Activated CD4-positive, alpha-beta T cell treated with anti-CD3 and anti-CD28 coated beads for 36 hours (primary cell): ENCODE measurements at regions of chr7 and their contacts with region 1.

Region 1: DNA sequence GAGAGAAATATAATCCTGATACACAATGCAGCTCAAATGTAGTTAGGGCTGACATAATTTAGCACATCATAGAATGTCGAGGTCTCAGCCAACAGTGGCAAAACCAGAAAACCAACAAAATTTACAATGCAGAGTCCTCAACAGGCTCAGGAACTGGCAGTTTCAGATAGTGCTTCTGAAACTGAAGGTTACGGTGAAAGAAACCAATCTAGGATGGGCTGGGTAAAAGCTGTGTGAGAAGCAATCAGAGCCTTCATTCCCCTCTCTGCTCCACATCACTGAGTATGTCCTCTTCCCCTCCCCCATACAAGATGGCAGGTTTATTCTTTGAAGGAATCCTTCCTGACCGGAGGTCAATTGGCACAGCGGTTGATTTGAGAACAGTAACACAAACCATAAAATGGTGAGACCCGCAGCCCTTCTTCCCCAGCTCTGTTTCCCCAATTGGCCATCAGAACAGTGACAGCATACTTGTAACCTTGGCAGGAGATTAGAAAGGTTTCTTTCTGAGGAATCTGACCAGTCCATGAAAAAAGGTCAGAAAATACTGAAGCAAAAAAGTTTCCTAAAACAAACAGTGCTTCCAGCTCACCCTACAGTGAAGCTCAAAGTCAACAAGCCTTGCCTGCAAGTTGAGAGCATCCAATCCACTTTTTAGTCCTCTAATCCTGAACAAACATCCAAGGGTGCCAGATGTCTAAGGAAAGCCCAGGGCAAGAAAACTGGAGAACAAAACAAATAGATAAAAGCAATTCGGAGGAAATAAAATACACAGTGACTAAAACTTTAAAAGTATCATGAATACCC is 54.0 kb upstream of the IL6 start:
- DNase-seq: no peak
- ATAC-seq: no peak
- H3K4me3 Mint-ChIP-seq: no peak overlapping the region
- H3K27ac Mint-ChIP-seq: no peak overlapping the region
- H3K4me1 Mint-ChIP-seq: peaks cover 56% of the 10 kb centered on the region
- H3K27me3 Mint-ChIP-seq: peaks cover 1% of the 10 kb centered on the region

Region 2: DNA sequence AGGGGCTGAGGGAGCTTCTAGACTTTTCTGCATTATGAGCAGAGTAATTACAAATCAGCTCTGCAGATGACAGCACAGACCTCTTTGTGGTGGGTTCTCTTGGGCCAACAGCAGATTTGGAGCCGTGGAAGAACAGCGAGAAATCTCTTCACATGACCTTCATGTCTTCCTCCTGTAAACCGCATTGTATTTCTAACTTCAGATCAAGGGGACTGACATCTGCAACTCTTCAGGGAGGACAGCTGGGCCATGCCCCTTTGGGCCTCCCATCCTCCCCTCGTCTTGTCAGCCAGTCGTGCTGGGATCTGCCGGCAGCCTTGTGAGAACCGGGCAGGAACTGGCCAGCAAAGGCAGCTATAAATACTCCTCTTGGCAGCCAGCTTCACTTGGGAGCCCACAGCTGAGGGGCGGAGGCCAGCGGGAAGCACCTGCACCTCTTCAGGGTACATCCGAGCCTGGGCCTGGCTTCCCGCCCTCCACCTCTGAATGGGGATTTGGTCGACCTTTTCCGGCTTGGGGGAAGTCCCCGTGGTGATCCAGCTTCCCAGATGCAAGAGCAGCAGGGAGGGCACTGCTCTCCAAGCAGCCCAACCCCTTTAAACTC is 227.8 kb before region 1 on chr7:
- CTCF ChIA-PET with region 1: no interaction called
- POLR2A ChIA-PET with region 1: no interaction called
- intact Hi-C with region 1: no loop called
- DNase-seq: peak; percentile 10
- ATAC-seq: no peak
- H3K4me3 Mint-ChIP-seq: no peak overlapping the region
- H3K27ac Mint-ChIP-seq: no peak overlapping the region
- H3K4me1 Mint-ChIP-seq: peaks cover 18% of the 10 kb centered on the region
- H3K27me3 Mint-ChIP-seq: peaks cover 18% of the 10 kb centered on the region

Region 3: GRCh38 chr7:22559829-22560489 is 113.1 kb before region 1 on chr7:
- CTCF ChIA-PET with region 1: interaction called, 3 read pairs
- POLR2A ChIA-PET with region 1: no interaction called
- intact Hi-C with region 1: loop called (anchors 2 to 5 kb)
- DNase-seq: peak; percentile 82
- ATAC-seq: peak; percentile 65
- H3K4me3 Mint-ChIP-seq: no peak overlapping the region
- H3K27ac Mint-ChIP-seq: no peak overlapping the region
- H3K4me1 Mint-ChIP-seq: peaks cover 37% of the 10 kb centered on the region
- H3K27me3 Mint-ChIP-seq: peaks cover 16% of the 10 kb centered on the region

Region 4: DNA sequence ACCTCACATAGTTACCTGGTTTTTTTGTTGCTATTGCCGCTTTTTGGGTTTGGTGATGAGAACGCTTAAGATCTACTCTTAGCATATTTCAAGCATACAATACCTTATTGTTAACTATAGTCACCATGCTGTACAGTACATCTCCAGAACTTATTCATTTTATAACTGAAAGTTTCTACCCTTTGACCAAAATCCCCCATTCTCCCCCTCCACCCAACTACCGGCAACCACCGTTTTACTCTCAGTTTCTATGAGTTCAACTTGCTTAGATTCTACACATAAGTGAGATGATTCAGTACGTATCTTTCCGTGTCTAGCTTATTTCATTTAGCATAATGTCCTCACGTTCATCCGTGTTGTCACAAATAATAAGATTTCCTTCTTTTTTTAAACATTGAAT is 32.8 kb before region 1 on chr7:
- CTCF ChIA-PET with region 1: no interaction called
- POLR2A ChIA-PET with region 1: no interaction called
- intact Hi-C with region 1: loop called (anchors 1 to 2 kb)
- DNase-seq: peak; percentile 69
- ATAC-seq: peak; percentile 97
- H3K4me3 Mint-ChIP-seq: no peak overlapping the region
- H3K27ac Mint-ChIP-seq: no peak overlapping the region
- H3K4me1 Mint-ChIP-seq: peaks cover 22% of the 10 kb centered on the region
- H3K27me3 Mint-ChIP-seq: peaks cover 31% of the 10 kb centered on the region

Region 5: DNA sequence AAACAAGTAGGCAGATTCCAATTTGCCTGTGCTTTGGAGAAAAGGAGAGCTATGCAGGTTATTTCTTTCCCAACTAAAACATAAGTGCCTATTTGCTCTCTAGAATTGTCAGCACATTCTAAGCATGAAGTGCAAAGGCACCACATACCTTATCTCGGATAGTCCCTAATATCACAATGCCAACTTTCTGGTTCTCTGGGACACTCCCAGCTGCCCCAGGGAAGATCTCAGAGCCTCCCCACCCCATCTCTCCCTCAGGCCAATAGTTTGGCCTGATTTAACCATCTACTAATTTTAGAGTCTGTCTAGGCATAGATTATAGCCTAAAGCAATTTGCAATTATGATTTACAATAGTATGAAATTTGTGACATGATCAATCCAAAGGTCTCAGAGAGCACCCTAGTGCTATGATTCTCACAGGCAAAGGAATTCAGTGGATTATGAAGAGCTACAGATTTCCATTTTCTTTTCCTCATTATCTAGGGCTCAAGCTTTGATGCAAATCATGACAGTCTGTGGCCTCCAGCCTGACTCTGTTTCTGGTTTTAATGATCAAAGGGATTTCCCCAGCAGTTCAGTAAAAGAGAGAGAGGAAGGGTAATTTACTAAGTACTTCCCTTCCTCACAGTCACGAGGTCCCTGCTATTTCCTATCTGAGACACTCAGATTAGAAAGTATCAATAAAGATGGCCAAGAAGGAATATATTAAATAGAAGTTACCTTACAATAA is 25.0 kb after region 1 on chr7:
- CTCF ChIA-PET with region 1: interaction called, 3 read pairs
- POLR2A ChIA-PET with region 1: interaction called, 5 read pairs
- intact Hi-C with region 1: loop called (anchors 1 kb)
- DNase-seq: peak; percentile 42
- ATAC-seq: peak; percentile 72
- H3K4me3 Mint-ChIP-seq: no peak overlapping the region
- H3K27ac Mint-ChIP-seq: peak overlapping the region; percentile 86
- H3K4me1 Mint-ChIP-seq: peaks cover 63% of the 10 kb centered on the region
- H3K27me3 Mint-ChIP-seq: peaks cover 3% of the 10 kb centered on the region

Region 6: GRCh38 chr7:22854158-22855048 is 181.4 kb after region 1 on chr7:
- CTCF ChIA-PET with region 1: no interaction called
- POLR2A ChIA-PET with region 1: no interaction called
- intact Hi-C with region 1: loop called in 1 of 2 experiments (anchors 2 kb)
- DNase-seq: peak; percentile 89
- ATAC-seq: peak; percentile 74
- H3K4me3 Mint-ChIP-seq: peak overlapping the region; percentile 92
- H3K27ac Mint-ChIP-seq: peak overlapping the region; percentile 92
- H3K4me1 Mint-ChIP-seq: peaks cover 34% of the 10 kb centered on the region
- H3K27me3 Mint-ChIP-seq: peaks cover 2% of the 10 kb centered on the region